ENCODE measurements at regions of chr1 and their contacts with region 1.

Region 1: DNA sequence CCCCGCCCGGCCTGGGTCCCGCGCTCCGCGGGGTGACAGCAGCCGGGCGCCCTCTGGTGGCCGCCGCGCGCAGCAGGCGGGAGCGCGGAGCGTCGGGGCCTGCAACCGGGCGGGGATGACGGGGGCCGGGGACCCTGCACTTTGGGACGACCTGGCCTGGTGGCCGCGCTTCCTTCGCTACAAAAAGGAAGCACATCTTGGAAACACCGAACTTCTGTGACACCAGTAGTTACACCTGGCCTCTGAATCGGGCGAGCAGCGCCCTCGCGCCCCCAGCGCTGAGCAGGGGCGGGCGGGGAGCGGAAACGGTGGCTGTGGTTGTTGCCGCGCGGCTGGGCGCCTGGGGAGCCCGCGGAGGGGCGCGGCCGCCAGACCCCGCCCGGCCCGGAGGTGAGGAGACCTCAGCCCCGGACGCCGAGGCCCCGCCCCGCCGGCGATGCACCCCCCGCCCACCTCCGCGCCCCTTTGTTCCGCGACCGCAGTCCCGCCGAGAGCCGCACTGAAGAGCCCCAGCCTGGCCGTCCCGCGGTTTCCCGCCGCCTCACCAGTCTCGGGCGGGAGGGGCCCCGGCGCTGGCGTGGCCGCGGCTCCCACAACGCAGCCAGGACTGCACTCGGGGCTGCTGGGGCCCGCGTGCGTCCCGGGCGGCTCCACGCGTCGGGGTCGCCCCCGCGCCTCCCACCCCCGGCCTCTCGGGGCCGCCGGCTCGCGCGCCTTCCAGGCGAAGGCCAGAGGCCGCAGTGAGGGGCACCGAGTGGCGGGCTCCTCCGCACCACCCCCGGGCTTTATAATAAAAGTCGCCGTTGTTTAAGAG is 59.3 kb downstream of the H3-3A start:
- DNase-seq: peak; percentile 65 to 85 (median 70)
- ATAC-seq: peak; percentile 37 to 88 (median 75)
- H3K4me3 ChIP-seq: peak overlapping the region; percentile 57 to 83 (median 69)
- H3K27ac ChIP-seq: peak overlapping the region; percentile 25 to 87 (median 74)
- H3K4me1 ChIP-seq: peaks cover 0 to 17% (median 8%) of the 10 kb centered on the region in 12 donors
- H3K27me3 ChIP-seq: no peaks in the 10 kb centered on the region
- CTCF ChIP-seq: peak; percentile 61 to 97 (median 82)
- POLR2A ChIP-seq: no peak

Region 2: GRCh38 chr1:226062558-226063223 is 59.1 kb before region 1 on chr1 and contains the start of gene H3-3A:
- intact Hi-C with region 1: loop called (anchors 1 to 5 kb)
- DNase-seq: peak; percentile 99 to 100 (median 99)
- ATAC-seq: peak; percentile 92 to 95 (median 93)
- H3K4me3 ChIP-seq: peak within 1 kb of the TSS; percentile 66 to 93 (median 88)
- H3K27ac ChIP-seq: peak within 1 kb of the TSS; percentile 95 to 100 (median 99)
- H3K4me1 ChIP-seq: peaks cover 6 to 49% (median 42%) of the 10 kb centered on the region in 12 donors
- H3K27me3 ChIP-seq: no peaks in the 10 kb centered on the region
- CTCF ChIP-seq: peak in 4 of 12 donors; percentile 8 to 31 (median 18)
- POLR2A ChIP-seq: peak; percentile 85 to 99
- total RNA-seq, gene H3-3A: 241 to 386 (median 298) TPM

Region 3: GRCh38 chr1:226195144-226195543 is 73.3 kb after region 1 on chr1:
- intact Hi-C with region 1: loop called (anchors 1 to 5 kb)
- DNase-seq: no peak
- ATAC-seq: no peak
- H3K4me3 ChIP-seq: no peak overlapping the region
- H3K27ac ChIP-seq: no peak overlapping the region
- H3K4me1 ChIP-seq: peaks cover 0 to 10% (median 0%) of the 10 kb centered on the region in 12 donors
- H3K27me3 ChIP-seq: no peaks in the 10 kb centered on the region
- CTCF ChIP-seq: no peak
- POLR2A ChIP-seq: no peak

Region 4: GRCh38 chr1:226332947-226333346 is 211.2 kb after region 1 on chr1:
- intact Hi-C with region 1: loop called in 8 of 10 experiments (anchors 5 to 10 kb)
- DNase-seq: no peak
- ATAC-seq: no peak
- H3K4me3 ChIP-seq: no peak overlapping the region
- H3K27ac ChIP-seq: no peak overlapping the region
- H3K4me1 ChIP-seq: no peaks in the 10 kb centered on the region
- H3K27me3 ChIP-seq: peaks cover 0 to 5% (median 0%) of the 10 kb centered on the region in 9 donors
- CTCF ChIP-seq: no peak
- POLR2A ChIP-seq: no peak

Region 5: DNA sequence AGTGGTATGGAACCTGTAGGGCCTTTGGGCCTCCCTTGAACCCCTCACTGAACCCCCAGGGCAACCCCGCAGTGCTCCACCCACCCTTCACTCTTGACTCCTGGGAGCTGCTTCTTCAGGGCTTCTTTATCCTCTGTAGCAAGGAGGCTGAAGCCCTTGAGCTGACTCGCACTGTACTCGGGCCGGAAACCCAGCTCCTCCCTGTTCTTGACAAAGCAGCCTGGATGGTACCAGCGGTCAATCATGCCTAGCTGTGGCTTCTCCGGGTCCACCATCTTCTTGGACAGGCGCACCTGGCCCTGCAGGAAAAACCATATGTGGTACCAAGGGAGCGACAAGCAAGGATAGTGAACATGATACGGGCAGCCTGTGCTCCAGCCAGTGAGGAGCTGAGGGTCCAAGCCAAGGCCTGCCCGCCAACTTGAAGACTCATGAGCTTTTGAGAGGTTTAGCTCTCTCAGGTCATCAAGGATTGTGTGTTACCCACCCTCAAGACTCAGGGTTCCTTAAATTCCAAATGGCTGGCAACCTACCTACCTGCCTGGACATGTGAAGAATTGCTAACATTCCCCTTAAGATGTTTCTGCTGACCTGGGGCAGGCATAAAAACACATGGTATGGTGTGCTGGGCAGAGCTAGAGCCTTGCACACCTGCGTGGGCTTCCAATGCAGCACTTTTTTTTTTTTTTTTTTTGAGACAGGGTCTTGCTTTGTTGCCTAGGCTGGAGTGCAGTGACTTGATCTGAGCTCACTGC is 268.7 kb after region 1 on chr1:
- intact Hi-C with region 1: no loop called
- DNase-seq: no peak
- ATAC-seq: no peak
- H3K4me3 ChIP-seq: no peak overlapping the region
- H3K27ac ChIP-seq: no peak overlapping the region
- H3K4me1 ChIP-seq: peaks cover 0 to 5% (median 0%) of the 10 kb centered on the region in 12 donors
- H3K27me3 ChIP-seq: no peaks in the 10 kb centered on the region
- CTCF ChIP-seq: no peak
- POLR2A ChIP-seq: no peak